Activated CD4-positive, alpha-beta T cell treated with anti-CD3 and anti-CD28 coated beads for 36 hours (primary cell): ENCODE measurements at regions of chr5 and their contacts with region 1.

Region 1: DNA sequence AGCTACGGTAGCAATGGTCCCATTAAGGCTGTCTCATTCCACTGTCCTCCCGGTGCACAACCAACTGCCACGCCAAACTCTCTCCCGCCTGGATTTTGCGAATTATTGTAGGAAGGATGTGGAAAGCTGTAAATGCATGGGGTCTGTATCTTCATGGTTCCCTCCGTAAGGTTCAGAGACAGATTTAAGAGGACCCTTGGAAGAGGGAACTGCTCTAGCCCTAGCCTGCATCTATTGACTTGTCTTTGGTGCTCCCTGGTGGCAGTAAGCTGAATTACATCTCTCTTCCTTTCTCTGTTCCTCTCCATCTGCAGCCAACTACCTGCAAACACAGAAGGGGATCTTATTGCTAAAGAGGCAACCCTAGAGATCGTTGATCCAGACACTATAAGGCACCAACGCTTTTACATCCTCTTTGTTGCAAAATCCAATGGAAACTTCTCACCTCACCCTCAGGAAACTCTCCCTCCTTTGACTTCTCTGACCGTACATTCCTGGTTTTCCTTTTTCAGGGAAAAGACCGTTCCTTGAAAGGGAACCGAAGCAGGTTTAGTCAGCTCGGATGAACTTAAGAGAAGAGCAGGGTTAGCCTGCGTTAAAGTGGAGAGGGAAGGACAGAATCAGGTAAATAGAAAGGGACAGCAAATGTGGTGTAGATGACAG is 11.9 kb downstream of the CAPSL start:
- DNase-seq: peak; percentile 76
- ATAC-seq: peak; percentile 42
- H3K4me3 Mint-ChIP-seq: peak overlapping the region; percentile 78
- H3K27ac Mint-ChIP-seq: peak overlapping the region; percentile 69
- H3K4me1 Mint-ChIP-seq: peaks cover 49% of the 10 kb centered on the region
- H3K27me3 Mint-ChIP-seq: no peaks in the 10 kb centered on the region

Region 2: DNA sequence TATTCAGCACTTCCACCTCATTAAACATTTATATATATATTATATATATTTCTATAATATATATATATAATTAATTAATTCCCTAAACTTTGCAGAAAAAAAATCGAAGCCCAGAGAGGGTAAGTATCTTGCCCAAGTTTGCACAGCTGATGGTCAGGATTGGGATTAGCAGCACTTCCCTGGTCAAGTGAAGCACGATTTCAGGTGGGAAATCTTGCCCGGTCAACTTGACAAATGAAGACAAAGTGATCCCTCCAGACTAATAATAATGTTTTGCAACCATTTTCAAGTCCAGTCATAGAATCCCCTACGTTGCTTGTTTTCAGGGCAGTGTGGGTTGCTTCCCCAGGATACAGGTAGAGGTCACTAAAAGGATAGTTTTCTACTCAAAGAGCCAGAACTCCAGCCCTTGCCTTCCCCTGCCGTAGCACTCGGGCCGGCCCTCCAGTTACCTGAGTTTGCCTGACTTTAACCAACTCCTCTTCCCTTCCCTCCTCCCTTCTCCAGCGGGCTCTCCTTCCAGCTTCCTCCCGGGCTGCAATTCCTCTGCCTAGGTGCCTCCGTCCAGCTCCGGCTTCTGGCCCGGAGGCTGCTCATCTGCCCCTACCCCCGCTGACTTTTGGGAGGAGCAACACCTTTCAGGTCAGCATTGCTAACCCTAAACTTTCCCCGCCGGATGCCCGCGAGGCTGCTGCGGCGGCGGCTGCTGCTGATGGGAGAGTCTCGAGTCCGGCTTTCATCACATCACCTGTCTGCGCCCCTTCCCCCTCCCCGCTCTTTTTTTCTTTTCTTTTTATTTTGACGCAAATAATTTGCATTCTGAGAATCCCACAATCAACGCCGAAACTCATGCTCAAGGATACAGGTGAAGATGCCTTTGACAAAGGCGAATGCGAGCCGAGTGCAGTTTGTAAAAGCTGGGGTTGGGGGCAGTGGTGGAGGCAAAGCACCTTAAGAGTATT is 697.2 kb before region 1 on chr5:
- CTCF ChIA-PET with region 1: interaction called, 3 read pairs
- POLR2A ChIA-PET with region 1: no interaction called
- intact Hi-C with region 1: loop called (anchors 1 kb)
- DNase-seq: peak; percentile 32
- ATAC-seq: no peak
- H3K4me3 Mint-ChIP-seq: peak overlapping the region; percentile 54
- H3K27ac Mint-ChIP-seq: no peak overlapping the region
- H3K4me1 Mint-ChIP-seq: peaks cover 6% of the 10 kb centered on the region
- H3K27me3 Mint-ChIP-seq: peaks cover 53% of the 10 kb centered on the region

Region 3: DNA sequence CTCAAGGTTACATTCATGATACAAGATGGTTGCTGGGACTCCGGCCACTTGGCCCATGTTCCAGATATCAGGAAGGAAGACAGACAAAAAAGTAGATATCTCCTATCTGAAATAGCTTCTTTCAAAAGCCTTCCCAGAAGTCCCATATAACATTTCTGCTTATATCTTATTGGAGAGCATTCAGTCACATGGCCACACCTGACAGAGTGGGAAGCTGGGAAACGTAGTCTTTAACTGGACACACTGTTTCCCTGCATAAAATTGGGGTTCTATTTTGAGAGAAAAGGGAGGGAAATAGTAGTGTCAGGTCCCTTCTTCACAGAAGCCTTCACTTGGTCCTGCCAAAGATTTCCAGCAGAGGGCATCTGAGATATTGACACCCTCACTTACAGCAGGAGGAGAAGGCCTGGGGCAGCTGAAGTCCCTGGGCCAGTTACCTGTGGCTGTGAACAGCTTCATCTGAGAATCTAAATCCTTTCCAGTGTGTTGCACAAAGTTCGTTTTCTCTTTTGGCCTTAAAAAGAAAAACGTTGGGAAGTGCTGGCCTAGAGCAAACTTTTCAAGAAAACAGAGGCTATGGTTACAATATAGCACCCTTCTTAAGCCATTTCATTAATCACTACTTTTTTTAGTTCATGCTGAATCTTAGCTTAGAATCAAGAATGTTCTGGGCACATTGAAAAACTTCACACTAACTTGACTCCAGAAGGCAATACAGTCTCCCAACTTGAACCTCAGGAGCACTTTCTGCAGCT is 275.3 kb before region 1 on chr5:
- CTCF ChIA-PET with region 1: interaction called, 111 read pairs
- POLR2A ChIA-PET with region 1: interaction called, 5 read pairs
- intact Hi-C with region 1: loop called (anchors 1 kb)
- DNase-seq: peak; percentile 76
- ATAC-seq: peak; percentile 97
- H3K4me3 Mint-ChIP-seq: no peak overlapping the region
- H3K27ac Mint-ChIP-seq: peak overlapping the region; percentile 64
- H3K4me1 Mint-ChIP-seq: peaks cover 25% of the 10 kb centered on the region
- H3K27me3 Mint-ChIP-seq: no peaks in the 10 kb centered on the region

Region 4: GRCh38 chr5:35794684-35795375 is 131.7 kb before region 1 on chr5:
- CTCF ChIA-PET with region 1: interaction called, 10 read pairs
- POLR2A ChIA-PET with region 1: interaction called, 3 read pairs
- intact Hi-C with region 1: no loop called
- DNase-seq: peak; percentile 45
- ATAC-seq: peak; percentile 40
- H3K4me3 Mint-ChIP-seq: peak overlapping the region; percentile 25
- H3K27ac Mint-ChIP-seq: peak overlapping the region; percentile 91
- H3K4me1 Mint-ChIP-seq: peaks cover 90% of the 10 kb centered on the region
- H3K27me3 Mint-ChIP-seq: no peaks in the 10 kb centered on the region

Region 5: DNA sequence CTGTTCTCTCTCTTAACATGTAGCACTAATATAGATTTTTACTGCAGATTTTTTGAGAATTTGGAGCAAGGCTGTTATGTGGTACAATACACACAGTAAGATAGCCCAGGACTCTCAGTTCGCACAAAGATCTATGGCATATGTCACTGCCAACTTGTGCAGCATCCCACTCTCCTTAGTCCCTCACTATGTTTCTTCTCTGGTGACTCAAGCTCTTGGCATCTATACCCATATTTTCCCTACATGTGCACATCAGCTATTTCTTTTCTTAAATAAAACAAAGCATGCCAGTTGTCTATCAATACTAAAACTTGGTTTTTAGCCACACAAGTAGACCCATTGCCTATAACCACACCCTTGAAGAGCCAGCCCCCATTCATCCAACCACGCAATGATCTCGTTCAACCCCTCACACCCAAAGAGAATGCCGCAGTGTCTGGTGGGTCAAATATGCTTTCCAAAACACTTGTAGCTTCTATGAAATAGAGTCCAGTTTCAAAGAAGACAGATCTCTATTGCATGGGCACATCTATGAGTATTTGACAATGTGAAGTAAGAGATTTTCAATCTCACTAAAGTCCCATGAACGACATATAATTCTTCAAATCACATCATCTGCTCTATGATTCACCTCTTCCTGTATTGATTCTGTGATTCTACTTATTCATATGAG is 88.0 kb before region 1 on chr5:
- CTCF ChIA-PET with region 1: interaction called, 4 read pairs
- POLR2A ChIA-PET with region 1: interaction called, 5 read pairs
- intact Hi-C with region 1: loop called (anchors 1 to 2 kb)
- DNase-seq: peak; percentile 69
- ATAC-seq: peak; percentile 65
- H3K4me3 Mint-ChIP-seq: peak overlapping the region; percentile 61
- H3K27ac Mint-ChIP-seq: peak overlapping the region; percentile 99
- H3K4me1 Mint-ChIP-seq: peaks cover 78% of the 10 kb centered on the region
- H3K27me3 Mint-ChIP-seq: no peaks in the 10 kb centered on the region

Region 6: DNA sequence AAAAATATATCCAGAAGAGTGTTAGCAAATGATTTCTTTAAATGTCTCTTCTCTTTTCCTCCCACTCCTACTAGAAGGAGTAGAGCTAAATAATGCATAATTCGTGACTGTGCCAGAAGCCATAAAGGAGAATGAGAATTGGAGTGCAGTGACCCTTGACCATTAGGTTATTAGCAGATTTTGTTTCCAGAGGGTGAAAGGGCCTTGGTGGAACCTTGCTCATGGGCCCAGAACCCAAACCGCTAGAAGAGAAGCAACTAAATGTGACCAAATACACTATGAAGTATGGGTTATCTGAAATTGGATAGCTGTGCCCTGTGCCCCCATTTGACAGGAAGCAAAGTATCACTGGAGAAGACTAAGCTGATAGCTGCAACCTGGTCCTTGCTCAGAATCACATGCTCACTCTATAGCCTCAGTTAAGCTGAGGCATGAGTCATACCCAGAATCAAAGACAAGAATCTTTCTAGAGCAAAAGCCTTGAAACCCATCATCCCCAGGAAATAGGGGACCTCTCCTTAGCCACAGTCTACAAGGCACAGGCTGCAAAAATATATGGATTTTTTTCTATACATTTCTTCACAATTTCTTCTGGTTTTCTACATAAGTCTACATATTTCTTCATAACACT is 24.4 kb before region 1 on chr5:
- CTCF ChIA-PET with region 1: interaction called, 15 read pairs
- POLR2A ChIA-PET with region 1: interaction called, 5 read pairs
- intact Hi-C with region 1: loop called (anchors 1 kb)
- DNase-seq: peak; percentile 42
- ATAC-seq: peak; percentile 60
- H3K4me3 Mint-ChIP-seq: peak overlapping the region; percentile 5
- H3K27ac Mint-ChIP-seq: peak overlapping the region; percentile 81
- H3K4me1 Mint-ChIP-seq: peaks cover 85% of the 10 kb centered on the region
- H3K27me3 Mint-ChIP-seq: no peaks in the 10 kb centered on the region

Region 7: GRCh38 chr5:35979715-35980114 is 53.2 kb after region 1 on chr5:
- CTCF ChIA-PET with region 1: no interaction called
- POLR2A ChIA-PET with region 1: no interaction called
- intact Hi-C with region 1: no loop called
- DNase-seq: no peak
- ATAC-seq: no peak
- H3K4me3 Mint-ChIP-seq: no peak overlapping the region
- H3K27ac Mint-ChIP-seq: no peak overlapping the region
- H3K4me1 Mint-ChIP-seq: no peaks in the 10 kb centered on the region
- H3K27me3 Mint-ChIP-seq: no peaks in the 10 kb centered on the region

Region 8: DNA sequence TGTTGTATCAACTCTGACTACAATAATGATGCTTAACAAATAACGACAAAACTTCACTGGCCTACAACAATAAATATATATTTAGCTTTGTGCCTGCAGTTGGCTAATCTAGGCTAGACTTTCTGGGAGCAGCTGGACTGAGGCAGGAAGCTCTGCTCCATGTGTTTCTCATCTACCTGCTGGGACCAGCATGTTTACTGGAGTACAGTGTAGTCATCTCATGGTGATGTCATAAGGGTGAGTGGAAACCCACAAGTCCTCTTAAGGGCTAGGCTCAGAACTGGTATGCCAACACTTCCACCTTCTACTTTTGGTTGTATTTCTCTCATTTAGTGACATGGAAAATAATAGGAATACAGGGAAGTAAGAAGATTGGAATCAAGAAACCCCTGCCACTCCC is 864.3 kb after region 1 on chr5:
- CTCF ChIA-PET with region 1: no interaction called
- POLR2A ChIA-PET with region 1: no interaction called
- intact Hi-C with region 1: no loop called
- DNase-seq: no peak
- ATAC-seq: no peak
- H3K4me3 Mint-ChIP-seq: no peak overlapping the region
- H3K27ac Mint-ChIP-seq: no peak overlapping the region
- H3K4me1 Mint-ChIP-seq: no peaks in the 10 kb centered on the region
- H3K27me3 Mint-ChIP-seq: no peaks in the 10 kb centered on the region